SK-N-SH (cell line): ENCODE measurements at regions of chr1 and their contacts with region 1.

Region 1: GRCh38 chr1:161038523-161039153 is at the start of gene TSTD1:
- DNase-seq: peak; percentile 80
- H3K4me3 ChIP-seq: peak within 1 kb of the TSS; percentile 55 to 60
- H3K27ac ChIP-seq: peak within 1 kb of the TSS in 1 of 2 experiments; percentile 54; a peak in 1 of 4 replicates
- H3K4me1 ChIP-seq: peaks cover 0 to 4% of the 10 kb centered on the region in 2 experiments; a peak in 1 of 4 replicates
- H3K27me3 ChIP-seq: no peaks in the 10 kb centered on the region
- CTCF ChIP-seq: no peak
- EP300 ChIP-seq: no peak
- RAD21 ChIP-seq: no peak
- polyA plus RNA-seq, gene TSTD1: 80.7 and 93.9 TPM in 2 replicates

Region 2: GRCh38 chr1:160862203-160863060 is 176.2 kb before region 1 on chr1 and contains the start of gene CD244:
- CTCF ChIA-PET with region 1: no interaction called
- POLR2A ChIA-PET with region 1: no interaction called
- DNase-seq: no peak
- H3K4me3 ChIP-seq: no peak within 1 kb of the TSS
- H3K27ac ChIP-seq: no peak within 1 kb of the TSS
- H3K4me1 ChIP-seq: no peaks in the 10 kb centered on the region
- H3K27me3 ChIP-seq: no peaks in the 10 kb centered on the region; the same call in 1 of the 2 replicates
- CTCF ChIP-seq: no peak
- EP300 ChIP-seq: no peak
- RAD21 ChIP-seq: no peak
- polyA plus RNA-seq, gene CD244: not detected in 2 replicates

Region 3: DNA sequence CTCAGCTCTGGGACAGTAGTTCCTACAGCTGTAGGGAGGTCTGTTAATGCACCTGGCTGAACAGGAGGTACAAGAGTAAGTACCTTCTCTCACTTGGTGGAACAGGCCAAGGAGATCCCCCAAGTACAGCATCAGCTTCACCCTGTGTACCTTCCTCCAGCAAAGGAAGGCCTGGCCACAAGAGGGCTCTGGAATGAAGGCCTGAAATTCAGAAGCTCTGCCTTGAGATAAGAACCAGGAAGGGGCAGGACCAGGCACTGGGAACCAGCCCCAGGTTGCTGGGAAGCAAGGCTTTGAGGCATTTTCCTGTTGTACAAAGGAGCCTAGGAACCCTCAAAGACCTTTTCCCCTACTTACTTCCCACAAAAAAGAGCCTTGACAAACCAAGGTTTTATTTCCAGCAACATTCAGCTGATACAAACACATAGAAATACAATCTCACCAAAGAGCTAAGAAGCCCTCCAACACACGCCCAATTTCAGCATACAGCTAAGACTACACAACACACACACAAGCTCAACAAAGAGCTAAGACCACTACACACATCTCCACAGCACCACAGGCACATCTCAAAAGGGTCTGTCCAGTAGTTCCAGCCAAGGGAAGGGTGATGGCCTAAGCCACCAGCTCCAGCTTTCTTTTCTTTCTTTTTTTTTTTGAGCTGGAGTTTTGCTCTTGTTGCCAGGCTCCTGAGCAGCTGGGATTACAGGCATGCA is 41.2 kb before region 1 on chr1:
- CTCF ChIA-PET with region 1: interaction called, 6 read pairs
- POLR2A ChIA-PET with region 1: interaction called, 11 read pairs
- DNase-seq: peak; percentile 40
- H3K4me3 ChIP-seq: no peak overlapping the region
- H3K27ac ChIP-seq: no peak overlapping the region
- H3K4me1 ChIP-seq: peaks cover 0 to 4% of the 10 kb centered on the region in 2 experiments; a peak in 2 of 4 replicates
- H3K27me3 ChIP-seq: no peaks in the 10 kb centered on the region
- CTCF ChIP-seq: peak; percentile 38
- EP300 ChIP-seq: no peak
- RAD21 ChIP-seq: peak; percentile 37

Region 4: GRCh38 chr1:161139765-161140164 is 101.1 kb after region 1 on chr1:
- CTCF ChIA-PET with region 1: interaction called, 13 read pairs
- POLR2A ChIA-PET with region 1: no interaction called
- DNase-seq: peak; percentile 64
- H3K4me3 ChIP-seq: no peak overlapping the region
- H3K27ac ChIP-seq: no peak overlapping the region
- H3K4me1 ChIP-seq: no peaks in the 10 kb centered on the region
- H3K27me3 ChIP-seq: no peaks in the 10 kb centered on the region
- CTCF ChIP-seq: peak; percentile 71
- EP300 ChIP-seq: no peak
- RAD21 ChIP-seq: peak; percentile 70